ENCODE measurements at regions of chr21 and their contacts with region 1.

Region 1: DNA sequence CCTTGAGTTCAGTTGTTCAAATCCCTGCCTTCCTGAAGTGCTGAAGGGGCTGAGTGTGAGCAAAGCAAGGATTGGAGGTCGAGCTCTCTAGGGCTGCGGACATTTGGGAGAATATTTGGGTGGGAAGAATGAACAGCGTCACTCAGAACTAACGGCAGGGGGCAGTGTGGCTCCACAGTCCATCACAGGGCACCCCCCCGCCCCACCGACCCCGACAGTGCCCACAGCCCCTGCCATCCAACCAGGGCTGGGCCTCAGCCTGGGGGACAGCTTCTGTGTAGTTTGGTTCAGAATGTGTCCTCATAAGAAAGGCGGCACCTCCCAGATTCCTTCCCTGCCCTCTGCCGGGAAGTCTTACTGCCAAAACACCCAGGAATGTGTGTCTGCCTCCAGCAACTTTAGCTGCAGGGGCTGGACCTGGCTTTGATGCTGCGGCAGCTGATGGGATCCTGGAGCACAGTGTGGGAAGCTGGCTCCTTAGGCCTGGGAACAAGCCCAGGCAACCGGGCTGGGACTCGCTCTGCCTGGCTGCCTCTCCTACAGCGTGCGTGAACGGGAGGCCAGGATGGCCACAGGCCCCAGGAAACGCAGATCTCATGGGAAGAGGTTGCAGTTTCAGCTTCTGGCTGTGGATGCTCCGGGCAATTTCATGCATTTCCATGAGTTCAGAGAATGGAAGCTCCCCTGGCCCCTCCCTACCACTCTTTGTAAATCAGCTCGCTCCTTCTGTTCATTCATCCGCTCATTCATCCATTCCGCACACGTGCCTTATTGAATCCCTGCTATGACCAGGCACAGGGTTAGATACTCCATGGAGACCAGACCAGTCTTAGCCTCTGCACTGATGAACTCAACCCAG is 104.9 kb upstream of the TMPRSS2 start:
- DNase-seq: peak in 2 of 3 donors; percentile 19 to 30
- H3K4me3 ChIP-seq: no peak overlapping the region
- H3K4me3 Mint-ChIP-seq: peak overlapping the region in 1 of 2 donors; percentile 48
- H3K27ac ChIP-seq: no peak overlapping the region
- H3K27ac Mint-ChIP-seq: no peak overlapping the region
- H3K4me1 ChIP-seq: no peaks in the 10 kb centered on the region
- H3K4me1 Mint-ChIP-seq: no peaks in the 10 kb centered on the region
- H3K27me3 ChIP-seq: peaks cover 0 to 4% of the 10 kb centered on the region in 2 donors
- H3K27me3 Mint-ChIP-seq: peaks cover 9 to 19% (median 11%) of the 10 kb centered on the region in 3 donors
- CTCF ChIP-seq: peak; percentile 82

Region 2: GRCh38 chr21:41583274-41583790 is 29.6 kb before region 1 on chr21:
- intact Hi-C with region 1: no loop called
- DNase-seq: no peak
- H3K4me3 ChIP-seq: no peak overlapping the region
- H3K4me3 Mint-ChIP-seq: no peak overlapping the region
- H3K27ac ChIP-seq: no peak overlapping the region
- H3K27ac Mint-ChIP-seq: no peak overlapping the region
- H3K4me1 ChIP-seq: no peaks in the 10 kb centered on the region
- H3K4me1 Mint-ChIP-seq: no peaks in the 10 kb centered on the region
- H3K27me3 ChIP-seq: no peaks in the 10 kb centered on the region
- H3K27me3 Mint-ChIP-seq: peaks cover 0 to 4% (median 0%) of the 10 kb centered on the region in 3 donors
- CTCF ChIP-seq: no peak

Region 3: GRCh38 chr21:41725421-41726041 is 112.6 kb after region 1 on chr21:
- intact Hi-C with region 1: no loop called
- DNase-seq: peak; percentile 61 to 65 (median 62)
- H3K4me3 ChIP-seq: peak overlapping the region; percentile 10 to 73 (median 42)
- H3K4me3 Mint-ChIP-seq: peak overlapping the region; percentile 72 to 89
- H3K27ac ChIP-seq: peak overlapping the region; percentile 61 to 81
- H3K27ac Mint-ChIP-seq: peak overlapping the region in 3 of 7 donors; percentile 13 to 75 (median 38)
- H3K4me1 ChIP-seq: peaks cover 31 to 45% of the 10 kb centered on the region in 2 donors
- H3K4me1 Mint-ChIP-seq: peaks cover 40% of the 10 kb centered on the region
- H3K27me3 ChIP-seq: peaks cover 0 to 18% of the 10 kb centered on the region in 2 donors
- H3K27me3 Mint-ChIP-seq: peaks cover 29 to 55% (median 46%) of the 10 kb centered on the region in 3 donors
- CTCF ChIP-seq: no peak

Region 4: GRCh38 chr21:41777951-41778874 is 165.3 kb after region 1 on chr21:
- intact Hi-C with region 1: loop called (anchors 1 to 2 kb)
- DNase-seq: peak; percentile 57 to 68 (median 67)
- H3K4me3 ChIP-seq: no peak overlapping the region
- H3K4me3 Mint-ChIP-seq: peak overlapping the region in 1 of 2 donors; percentile 75
- H3K27ac ChIP-seq: no peak overlapping the region
- H3K27ac Mint-ChIP-seq: peak overlapping the region in 4 of 7 donors; percentile 35 to 85 (median 64)
- H3K4me1 ChIP-seq: peaks cover 0 to 6% of the 10 kb centered on the region in 2 donors
- H3K4me1 Mint-ChIP-seq: peaks cover 16% of the 10 kb centered on the region
- H3K27me3 ChIP-seq: peaks cover 26 to 53% of the 10 kb centered on the region in 2 donors
- H3K27me3 Mint-ChIP-seq: peaks cover 37 to 69% (median 66%) of the 10 kb centered on the region in 3 donors
- CTCF ChIP-seq: peak; percentile 98

Region 5: GRCh38 chr21:41816220-41817165 is 203.6 kb after region 1 on chr21:
- intact Hi-C with region 1: loop called in 1 of 2 experiments (anchors 2 kb)
- DNase-seq: peak; percentile 15 to 46 (median 31)
- H3K4me3 ChIP-seq: peak overlapping the region in 1 of 3 experiments; percentile 28
- H3K4me3 Mint-ChIP-seq: peak overlapping the region in 1 of 2 donors; percentile 71
- H3K27ac ChIP-seq: no peak overlapping the region
- H3K27ac Mint-ChIP-seq: peak overlapping the region in 5 of 7 donors; percentile 6 to 68 (median 33)
- H3K4me1 ChIP-seq: peaks cover 4 to 6% of the 10 kb centered on the region in 2 donors
- H3K4me1 Mint-ChIP-seq: peaks cover 7% of the 10 kb centered on the region
- H3K27me3 ChIP-seq: no peaks in the 10 kb centered on the region
- H3K27me3 Mint-ChIP-seq: no peaks in the 10 kb centered on the region
- CTCF ChIP-seq: peak; percentile 84